GM10248 (cell line): ENCODE measurements at regions of chr1 and their contacts with region 1.

Region 1: DNA sequence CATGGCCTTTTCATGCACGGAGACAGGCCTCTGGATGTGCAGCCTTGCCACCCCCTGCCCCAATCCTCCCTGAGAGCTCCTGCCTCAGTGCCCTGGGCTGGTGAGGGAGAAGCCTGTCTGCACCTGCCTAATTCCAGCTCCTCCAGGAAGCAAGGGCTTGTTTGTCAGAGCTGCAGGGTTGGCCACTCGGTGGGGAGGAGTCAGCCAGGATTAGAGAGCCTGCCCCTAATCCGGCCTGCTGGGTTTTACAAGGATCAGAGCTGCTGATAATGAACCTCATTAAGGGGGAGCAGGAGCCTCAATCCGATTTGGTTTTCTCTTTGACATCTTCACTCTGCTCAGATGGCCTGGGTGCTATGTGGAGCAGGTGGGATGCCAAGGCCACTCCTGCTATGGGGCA is 31.9 kb upstream of the LHX4 start:
- DNase-seq: no peak
- CTCF ChIP-seq: no peak

Region 2: DNA sequence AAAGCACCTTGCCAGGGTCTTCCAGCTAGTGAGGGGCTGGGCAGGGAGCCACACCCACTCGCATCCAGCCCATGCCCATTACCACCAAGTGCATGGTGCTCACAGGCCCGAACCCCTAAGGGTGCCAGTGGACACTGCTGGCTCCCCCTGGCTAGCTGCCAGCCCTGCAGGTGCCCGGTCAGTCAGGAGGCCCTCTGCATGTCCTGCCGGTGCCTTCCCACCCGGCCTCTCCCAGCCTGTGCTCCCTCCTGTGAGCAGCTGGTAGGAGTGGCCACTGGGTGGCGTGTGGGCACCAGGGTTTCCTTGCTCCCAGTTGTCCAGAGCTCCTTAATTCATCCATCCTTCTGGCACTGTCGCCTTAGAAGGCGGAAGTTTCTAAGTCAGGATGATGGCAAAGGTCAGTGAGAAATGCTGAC is 10.1 kb before region 1 on chr1:
- CTCF ChIA-PET with region 1: interaction called, 18 read pairs
- POLR2A ChIA-PET with region 1: no interaction called
- DNase-seq: peak; percentile 54
- CTCF ChIP-seq: peak; percentile 54